ENCODE measurements at regions of chr4 and their contacts with region 1.

Region 1: GRCh38 chr4:183532821-183533220 is 28.0 kb downstream of the ING2 start:
- DNase-seq: no peak
- ATAC-seq: no peak
- H3K4me3 ChIP-seq: no peak overlapping the region
- H3K27ac ChIP-seq: no peak overlapping the region
- H3K4me1 ChIP-seq: no peaks in the 10 kb centered on the region
- H3K27me3 ChIP-seq: no peaks in the 10 kb centered on the region
- CTCF ChIP-seq: no peak

Region 2: GRCh38 chr4:183492791-183493221 is 40.0 kb before region 1 on chr4:
- CTCF ChIA-PET with region 1: interaction called, 12 read pairs
- POLR2A ChIA-PET with region 1: no interaction called
- in situ Hi-C with region 1: no loop called
- intact Hi-C with region 1: no loop called
- DNase-seq: no peak
- ATAC-seq: peak; percentile 38; the same call in 1 of the 2 replicates
- H3K4me3 ChIP-seq: no peak overlapping the region
- H3K27ac ChIP-seq: no peak overlapping the region
- H3K4me1 ChIP-seq: no peaks in the 10 kb centered on the region
- H3K27me3 ChIP-seq: no peaks in the 10 kb centered on the region
- CTCF ChIP-seq: no peak

Measured in Panc1 (cell line).